HCT116 (cell line): ENCODE measurements at regions of chr17 and their contacts with region 1.

Region 1: DNA sequence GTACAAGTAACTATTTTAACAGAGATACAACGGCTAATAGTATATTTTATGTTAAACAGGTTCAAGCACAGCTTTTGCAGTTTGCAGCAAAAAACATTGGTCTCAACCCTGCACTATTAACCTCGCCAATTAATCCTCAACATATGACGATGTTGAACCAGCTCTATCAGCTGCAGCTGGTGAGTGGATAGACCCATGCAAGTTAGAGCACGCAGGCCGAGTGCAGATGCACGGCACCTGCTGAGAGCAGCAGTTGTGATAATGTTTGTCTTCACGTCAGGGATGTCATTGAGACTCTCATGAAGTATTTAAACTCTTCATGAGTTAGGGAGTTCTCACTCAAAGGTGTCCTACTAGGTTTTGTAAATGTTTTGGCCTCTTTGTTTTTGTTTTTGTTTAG is 45.6 kb downstream of the TMC6 start:
- DNase-seq: no peak
- ATAC-seq: no peak
- H3K4me3 ChIP-seq: no peak overlapping the region
- H3K27ac ChIP-seq: no peak overlapping the region
- H3K4me1 ChIP-seq: no peaks in the 10 kb centered on the region
- H3K27me3 ChIP-seq: no peaks in the 10 kb centered on the region
- CTCF ChIP-seq: no peak
- POLR2A ChIP-seq: no peak
- RAD21 ChIP-seq: no peak

Region 2: DNA sequence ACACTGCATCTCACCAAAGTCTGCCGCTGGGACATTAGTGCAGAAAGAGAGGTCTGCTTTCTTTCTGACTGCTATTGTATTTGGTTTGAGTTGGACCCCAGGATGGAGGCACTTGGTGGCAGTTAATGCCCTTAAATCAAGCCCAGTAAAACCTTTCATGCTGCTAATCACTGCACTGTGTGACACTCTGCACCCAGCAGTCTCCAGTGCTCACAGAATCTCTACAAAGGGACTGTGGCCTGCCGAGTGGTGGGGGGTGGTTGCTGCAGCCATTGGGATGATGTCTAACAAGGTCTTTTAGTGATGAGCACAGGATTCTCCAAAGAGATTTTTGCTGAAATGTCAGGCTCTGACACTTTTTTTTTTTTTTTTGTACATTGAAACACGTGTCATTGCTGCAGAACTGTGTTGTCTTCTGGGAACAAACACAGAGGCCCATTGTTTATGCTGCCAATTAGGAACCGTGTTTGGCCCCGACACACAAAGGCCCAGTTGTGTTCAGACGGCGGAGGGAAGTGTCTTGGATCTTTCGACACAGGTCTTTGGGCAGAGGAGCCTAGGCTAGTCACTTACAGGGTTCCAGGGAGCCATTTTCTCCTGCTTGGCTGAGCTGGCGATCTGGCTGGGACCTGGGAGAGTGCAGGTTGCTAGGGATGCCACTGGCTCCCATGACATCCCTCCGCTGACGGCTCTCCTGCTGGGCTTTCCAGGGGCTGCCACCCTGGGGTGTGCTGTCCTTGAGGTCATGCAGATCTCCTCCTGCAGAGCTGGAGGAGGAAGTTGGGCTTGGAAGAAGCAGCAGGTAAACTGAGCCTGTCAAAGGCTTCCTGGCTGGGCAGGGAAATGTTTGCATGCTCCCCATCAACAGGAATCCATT is 140.6 kb before region 1 on chr17:
- CTCF ChIA-PET with region 1: no interaction called
- POLR2A ChIA-PET with region 1: no interaction called
- RAD21 ChIA-PET with region 1: no interaction called
- intact Hi-C with region 1: no loop called
- DNase-seq: no peak
- ATAC-seq: no peak
- H3K4me3 ChIP-seq: no peak overlapping the region
- H3K27ac ChIP-seq: no peak overlapping the region
- H3K4me1 ChIP-seq: no peaks in the 10 kb centered on the region
- H3K27me3 ChIP-seq: no peaks in the 10 kb centered on the region
- CTCF ChIP-seq: no peak
- POLR2A ChIP-seq: no peak
- RAD21 ChIP-seq: no peak

Region 3: GRCh38 chr17:78040440-78041385 is 42.3 kb before region 1 on chr17:
- CTCF ChIA-PET with region 1: interaction called, 18 read pairs
- POLR2A ChIA-PET with region 1: no interaction called
- RAD21 ChIA-PET with region 1: no interaction called
- intact Hi-C with region 1: no loop called
- DNase-seq: peak; percentile 56
- ATAC-seq: peak; percentile 91
- H3K4me3 ChIP-seq: peak overlapping the region; percentile 56 to 67
- H3K27ac ChIP-seq: peak overlapping the region; percentile 75
- H3K4me1 ChIP-seq: peaks cover 17 to 30% of the 10 kb centered on the region in 2 experiments
- H3K27me3 ChIP-seq: no peaks in the 10 kb centered on the region
- CTCF ChIP-seq: peak in 2 of 3 experiments; percentile 15 to 27; a peak in 2 of 6 replicates
- POLR2A ChIP-seq: peak; percentile 63
- RAD21 ChIP-seq: no peak; the same call in 1 of the 2 replicates

Region 4: GRCh38 chr17:78069695-78070094 is 13.3 kb before region 1 on chr17:
- CTCF ChIA-PET with region 1: interaction called, 16 read pairs
- POLR2A ChIA-PET with region 1: no interaction called
- RAD21 ChIA-PET with region 1: no interaction called
- intact Hi-C with region 1: no loop called
- DNase-seq: no peak
- ATAC-seq: no peak
- H3K4me3 ChIP-seq: no peak overlapping the region
- H3K27ac ChIP-seq: no peak overlapping the region
- H3K4me1 ChIP-seq: no peaks in the 10 kb centered on the region
- H3K27me3 ChIP-seq: no peaks in the 10 kb centered on the region
- CTCF ChIP-seq: no peak
- POLR2A ChIP-seq: no peak
- RAD21 ChIP-seq: no peak

Region 5: DNA sequence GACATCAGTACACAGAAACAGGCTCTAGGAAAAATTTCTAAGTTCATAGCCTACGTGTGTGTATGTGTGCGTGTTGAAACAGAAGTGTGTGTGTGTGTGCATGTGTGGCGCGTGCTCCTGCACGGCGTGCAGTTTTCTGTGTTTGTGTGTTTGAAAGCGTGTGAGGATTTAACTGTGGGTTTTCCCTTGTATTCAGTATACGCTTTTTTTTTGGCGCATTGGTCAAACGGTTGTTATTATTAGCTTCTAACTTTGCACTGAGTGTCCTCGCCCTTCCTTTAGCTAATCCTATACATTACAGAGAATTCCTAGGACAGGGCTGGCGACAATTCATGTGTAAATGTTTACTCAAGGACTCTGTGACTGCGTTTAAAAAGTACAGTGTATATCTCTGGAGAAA is 22.6 kb after region 1 on chr17:
- CTCF ChIA-PET with region 1: interaction called, 12 read pairs
- POLR2A ChIA-PET with region 1: no interaction called
- RAD21 ChIA-PET with region 1: no interaction called
- intact Hi-C with region 1: no loop called
- DNase-seq: no peak
- ATAC-seq: no peak
- H3K4me3 ChIP-seq: no peak overlapping the region
- H3K27ac ChIP-seq: no peak overlapping the region
- H3K4me1 ChIP-seq: no peaks in the 10 kb centered on the region
- H3K27me3 ChIP-seq: no peaks in the 10 kb centered on the region
- CTCF ChIP-seq: no peak
- POLR2A ChIP-seq: no peak
- RAD21 ChIP-seq: no peak

Region 6: DNA sequence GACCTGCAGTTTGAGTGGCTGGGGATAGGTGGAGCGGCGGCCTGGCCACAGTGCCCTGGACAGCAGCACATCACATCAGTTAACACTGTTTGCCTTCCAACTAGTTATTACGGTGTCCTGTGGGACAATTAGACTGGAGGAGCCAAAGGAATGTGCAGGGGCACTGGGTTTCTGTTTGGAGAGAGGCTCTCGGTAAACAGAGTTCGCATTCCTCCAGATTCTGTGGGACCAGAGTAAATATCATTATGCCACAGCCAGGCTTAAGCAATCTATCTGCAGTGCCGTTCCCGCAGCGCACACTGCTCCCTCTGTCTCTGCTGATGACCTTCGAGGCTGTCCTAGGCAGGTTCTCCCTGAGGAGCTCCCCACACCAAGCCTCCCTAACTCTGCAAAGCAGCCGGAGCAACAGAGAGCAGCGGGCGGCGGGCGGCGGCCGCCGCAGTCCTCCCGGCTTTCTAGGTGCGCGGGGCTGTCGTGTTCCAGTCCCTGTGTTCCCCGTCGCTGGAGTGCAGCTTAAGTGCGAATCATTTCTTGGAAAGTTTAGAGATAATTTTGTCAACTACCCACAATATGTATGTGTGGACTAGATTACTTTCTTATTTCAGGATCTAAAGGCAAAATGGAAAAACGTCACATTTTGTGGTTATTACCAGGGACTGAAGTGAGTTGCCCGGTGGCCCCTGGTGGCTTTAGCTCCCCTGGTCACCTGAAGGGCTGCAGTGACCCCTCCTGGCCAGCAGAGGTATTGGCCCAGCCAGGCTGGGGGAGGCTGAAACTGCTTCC is 338.7 kb after region 1 on chr17:
- CTCF ChIA-PET with region 1: interaction called, 8 read pairs
- POLR2A ChIA-PET with region 1: no interaction called
- RAD21 ChIA-PET with region 1: no interaction called
- intact Hi-C with region 1: loop called (anchors 10 kb)
- DNase-seq: peak; percentile 51
- ATAC-seq: peak; percentile 95
- H3K4me3 ChIP-seq: no peak overlapping the region
- H3K27ac ChIP-seq: no peak overlapping the region
- H3K4me1 ChIP-seq: no peaks in the 10 kb centered on the region
- H3K27me3 ChIP-seq: no peaks in the 10 kb centered on the region
- CTCF ChIP-seq: peak; percentile 98 to 100 (median 100)
- POLR2A ChIP-seq: no peak
- RAD21 ChIP-seq: peak; percentile 98